Activated CD4-positive, alpha-beta T cell treated with anti-CD3 and anti-CD28 coated beads, Interleukin-2, amount 10 ng/mL, durations not matched to agents 24 days and 14 days (primary cell): ENCODE measurements at regions of chr6 and their contacts with region 1.

Region 1: DNA sequence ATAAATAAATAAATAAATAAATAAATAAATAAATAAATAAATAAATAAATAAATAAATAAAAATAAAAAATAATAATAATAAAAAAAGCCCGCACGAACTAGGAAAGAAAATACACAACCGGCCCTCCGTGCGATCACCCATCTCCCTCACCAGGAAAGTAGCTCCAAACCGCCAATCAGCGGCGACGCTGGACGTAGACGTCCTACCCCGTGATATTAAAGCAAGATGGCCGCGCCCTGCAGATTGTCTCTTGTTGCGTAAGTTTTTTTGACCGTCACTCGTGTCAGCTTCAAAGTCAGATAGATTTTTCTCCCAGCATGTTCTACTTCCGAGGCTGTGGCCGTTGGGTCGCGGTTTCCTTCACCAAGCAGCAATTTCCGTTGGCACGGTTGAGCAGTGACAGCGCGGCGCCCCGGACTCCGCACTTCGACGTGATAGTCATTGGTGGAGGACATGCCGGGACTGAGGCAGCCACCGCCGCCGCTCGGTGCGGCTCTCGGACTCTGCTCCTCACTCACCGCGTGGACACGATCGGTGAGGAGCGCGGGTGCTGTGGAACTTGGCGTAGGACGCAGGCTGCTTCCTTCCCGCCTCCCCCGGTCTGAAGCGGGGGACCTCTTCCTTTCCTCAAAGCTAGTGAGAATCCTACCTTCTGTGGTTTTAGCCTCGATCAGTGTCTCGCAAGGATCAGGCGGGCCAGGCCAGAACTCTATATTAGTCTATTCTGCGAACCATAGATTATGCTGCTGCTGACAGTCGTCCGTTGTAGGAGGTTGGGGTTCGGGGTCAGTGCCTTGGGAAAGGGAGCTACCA is at the start of gene MTO1:
- DNase-seq: peak; percentile 93
- H3K4me3 Mint-ChIP-seq: peak within 1 kb of the TSS; percentile 94
- H3K27ac Mint-ChIP-seq: peak within 1 kb of the TSS; percentile 98
- H3K4me1 Mint-ChIP-seq: peaks cover 45% of the 10 kb centered on the region
- H3K27me3 Mint-ChIP-seq: no peaks in the 10 kb centered on the region
- total RNA-seq, gene MTO1: 35.5 and 35.7 TPM in 2 replicates

Region 2: GRCh38 chr6:73451223-73452107 is 10.3 kb before region 1 on chr6:
- intact Hi-C with region 1: loop called (anchors 1 kb)
- DNase-seq: peak; percentile 83
- H3K4me3 Mint-ChIP-seq: peak overlapping the region; percentile 90
- H3K27ac Mint-ChIP-seq: peak overlapping the region; percentile 89
- H3K4me1 Mint-ChIP-seq: peaks cover 22% of the 10 kb centered on the region
- H3K27me3 Mint-ChIP-seq: no peaks in the 10 kb centered on the region

Region 3: GRCh38 chr6:73585566-73586415 is 124.0 kb after region 1 on chr6:
- intact Hi-C with region 1: loop called (anchors 5 kb)
- DNase-seq: peak; percentile 84
- H3K4me3 Mint-ChIP-seq: peak overlapping the region; percentile 91
- H3K27ac Mint-ChIP-seq: peak overlapping the region; percentile 98
- H3K4me1 Mint-ChIP-seq: peaks cover 22% of the 10 kb centered on the region
- H3K27me3 Mint-ChIP-seq: no peaks in the 10 kb centered on the region

Region 4: DNA sequence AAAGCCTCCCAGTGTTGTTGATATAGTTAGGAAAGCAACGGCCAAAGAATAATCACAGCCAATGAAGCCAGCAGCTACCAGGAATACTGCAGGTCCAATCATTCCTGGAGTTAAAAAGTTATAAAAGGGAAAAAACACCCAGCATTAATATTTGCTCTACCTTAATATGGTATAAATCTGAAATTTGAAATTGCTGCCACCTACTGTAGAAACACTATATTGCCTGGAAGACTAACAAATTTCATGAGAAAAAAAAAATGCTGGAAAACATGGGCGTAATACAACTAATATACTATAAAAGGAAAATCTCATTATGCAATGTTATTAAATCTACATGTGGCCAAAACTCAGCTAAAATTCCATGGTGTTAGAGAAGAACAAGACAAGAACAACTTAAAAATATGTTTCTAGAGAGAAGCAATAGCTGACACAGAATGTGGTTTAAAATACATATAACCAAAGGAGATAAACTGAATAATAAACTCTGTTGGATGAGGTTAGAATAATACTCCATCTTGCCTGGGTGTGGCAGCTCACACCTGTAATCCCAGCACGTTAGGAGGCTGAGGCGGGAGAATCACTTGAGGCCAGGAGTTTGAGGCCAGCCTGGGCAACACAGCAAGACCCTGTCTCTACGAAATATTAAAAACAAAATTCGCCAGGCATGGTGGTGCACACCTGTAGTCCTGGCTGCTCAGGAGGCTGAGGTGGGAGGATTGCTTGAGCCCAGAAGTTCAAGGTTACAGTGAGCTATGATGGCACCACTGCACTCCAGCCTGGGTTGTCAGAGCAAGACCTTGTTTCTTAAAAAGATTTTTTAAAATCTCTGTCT is 148.9 kb after region 1 on chr6:
- intact Hi-C with region 1: loop called (anchors 5 kb)
- DNase-seq: peak; percentile 61
- H3K4me3 Mint-ChIP-seq: no peak overlapping the region
- H3K27ac Mint-ChIP-seq: no peak overlapping the region
- H3K4me1 Mint-ChIP-seq: peaks cover 2% of the 10 kb centered on the region
- H3K27me3 Mint-ChIP-seq: no peaks in the 10 kb centered on the region

Region 5: DNA sequence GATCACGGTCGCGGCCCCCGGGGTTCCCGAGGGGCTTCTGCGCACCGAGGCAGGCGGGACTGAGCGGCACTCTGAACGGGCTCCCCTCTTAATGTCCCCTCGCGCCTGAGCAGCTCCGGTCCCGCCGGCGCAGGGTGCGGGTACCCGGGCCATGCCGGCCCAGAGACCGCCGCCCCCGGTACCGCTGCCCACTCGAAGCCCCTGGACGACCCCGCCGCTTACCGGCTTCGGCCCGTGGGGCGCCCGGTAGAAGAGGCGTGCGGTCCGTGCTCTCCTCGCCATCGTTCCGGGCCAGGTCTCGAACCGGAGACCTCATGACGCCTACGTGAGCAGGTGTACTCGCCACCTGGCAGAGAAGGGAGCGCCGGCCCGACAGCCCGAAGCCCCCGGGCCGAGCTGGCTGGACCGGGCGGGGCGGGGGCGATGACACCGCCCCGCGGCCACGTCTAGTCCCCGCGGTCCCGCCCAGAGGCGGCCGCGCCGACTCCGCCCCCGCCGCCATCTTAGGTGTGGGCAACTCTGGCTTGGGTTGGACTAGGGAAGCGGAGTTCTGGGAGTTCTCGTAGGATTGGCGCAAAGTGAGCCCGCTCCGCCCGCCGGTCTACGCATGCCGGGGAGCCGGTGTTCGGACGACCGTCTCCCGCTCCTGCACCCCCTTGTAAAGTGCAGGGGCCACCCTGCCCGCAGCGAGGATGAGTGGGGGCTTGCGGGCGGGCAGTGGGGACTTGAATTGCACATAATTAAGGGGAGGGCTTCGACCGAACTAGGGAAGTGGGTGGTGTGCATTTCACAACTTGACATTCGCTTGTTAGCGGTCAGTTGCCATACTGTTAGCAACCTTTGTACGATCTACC is 192.1 kb after region 1 on chr6 and contains the start of gene SLC17A5:
- intact Hi-C with region 1: loop called (anchors 2 kb)
- DNase-seq: peak; percentile 96
- H3K4me3 Mint-ChIP-seq: peak within 1 kb of the TSS; percentile 96
- H3K27ac Mint-ChIP-seq: peak within 1 kb of the TSS; percentile 97
- H3K4me1 Mint-ChIP-seq: peaks cover 25% of the 10 kb centered on the region
- H3K27me3 Mint-ChIP-seq: no peaks in the 10 kb centered on the region
- total RNA-seq, gene SLC17A5: 4.9 TPM in 2 replicates